CD8-positive, alpha-beta T cell (primary cell): ENCODE measurements at regions of chr12 and their contacts with region 1.

Region 1: DNA sequence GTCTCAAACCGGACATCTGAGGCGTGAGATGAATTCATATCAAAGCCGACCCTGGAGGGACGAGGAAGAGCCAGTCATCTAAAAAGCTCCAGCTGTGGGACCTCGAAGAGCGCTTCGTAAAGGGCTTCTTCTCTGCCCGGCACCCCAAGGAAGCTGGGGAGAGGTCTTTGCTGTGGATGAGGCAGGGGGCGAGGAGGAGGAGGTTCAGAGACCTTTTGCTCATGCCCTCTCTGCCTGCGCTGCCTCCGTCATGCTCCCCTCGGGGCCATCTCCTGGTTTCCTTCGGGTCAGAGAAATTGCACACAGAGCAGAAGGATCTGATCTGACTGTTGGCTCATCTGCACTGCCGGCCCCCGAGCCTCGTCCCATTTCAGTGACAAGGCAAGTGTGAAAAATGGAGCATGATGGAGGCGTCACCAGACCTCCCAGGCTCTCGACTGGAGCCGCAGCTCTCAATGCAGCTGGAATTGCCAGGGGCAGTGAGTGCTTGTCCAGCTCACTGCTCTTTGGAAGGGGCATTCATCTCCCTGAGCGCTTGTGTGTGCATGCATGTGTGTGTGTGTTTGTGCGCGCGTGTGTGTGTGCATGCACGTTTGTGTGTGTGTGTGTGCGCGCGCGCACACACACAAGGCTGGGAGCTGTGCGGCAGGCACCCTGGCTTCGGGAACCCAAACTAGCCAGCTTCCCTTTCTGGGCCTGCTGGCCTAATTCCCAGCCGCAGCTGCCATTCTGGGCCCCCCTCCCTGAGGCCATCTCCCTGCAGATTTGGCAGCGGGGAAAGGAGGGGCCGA is 9.2 kb downstream of the CABP1 start:
- DNase-seq: no peak
- ATAC-seq: no peak
- H3K4me3 ChIP-seq: no peak overlapping the region
- H3K4me3 Mint-ChIP-seq: no peak overlapping the region
- H3K27ac ChIP-seq: no peak overlapping the region
- H3K27ac Mint-ChIP-seq: no peak overlapping the region
- H3K4me1 ChIP-seq: peaks cover 7% of the 10 kb centered on the region
- H3K4me1 Mint-ChIP-seq: peaks cover 9% of the 10 kb centered on the region
- H3K27me3 ChIP-seq: peaks cover 14 to 21% of the 10 kb centered on the region in 2 experiments
- H3K27me3 Mint-ChIP-seq: peaks cover 47% of the 10 kb centered on the region
- CTCF ChIP-seq: peak; percentile 23

Region 2: GRCh38 chr12:120356567-120357030 is 293.0 kb before region 1 on chr12:
- CTCF ChIA-PET with region 1: interaction called, 6 read pairs
- POLR2A ChIA-PET with region 1: no interaction called
- intact Hi-C with region 1: loop called (anchors 1 to 5 kb)
- DNase-seq: peak; percentile 39 to 83 (median 75)
- ATAC-seq: peak; percentile 96
- H3K4me3 ChIP-seq: no peak overlapping the region
- H3K4me3 Mint-ChIP-seq: no peak overlapping the region
- H3K27ac ChIP-seq: no peak overlapping the region
- H3K27ac Mint-ChIP-seq: no peak overlapping the region
- H3K4me1 ChIP-seq: no peaks in the 10 kb centered on the region
- H3K4me1 Mint-ChIP-seq: peaks cover 2% of the 10 kb centered on the region
- H3K27me3 ChIP-seq: peaks cover 0 to 2% of the 10 kb centered on the region in 2 experiments
- H3K27me3 Mint-ChIP-seq: peaks cover 32% of the 10 kb centered on the region
- CTCF ChIP-seq: peak; percentile 89

Region 3: DNA sequence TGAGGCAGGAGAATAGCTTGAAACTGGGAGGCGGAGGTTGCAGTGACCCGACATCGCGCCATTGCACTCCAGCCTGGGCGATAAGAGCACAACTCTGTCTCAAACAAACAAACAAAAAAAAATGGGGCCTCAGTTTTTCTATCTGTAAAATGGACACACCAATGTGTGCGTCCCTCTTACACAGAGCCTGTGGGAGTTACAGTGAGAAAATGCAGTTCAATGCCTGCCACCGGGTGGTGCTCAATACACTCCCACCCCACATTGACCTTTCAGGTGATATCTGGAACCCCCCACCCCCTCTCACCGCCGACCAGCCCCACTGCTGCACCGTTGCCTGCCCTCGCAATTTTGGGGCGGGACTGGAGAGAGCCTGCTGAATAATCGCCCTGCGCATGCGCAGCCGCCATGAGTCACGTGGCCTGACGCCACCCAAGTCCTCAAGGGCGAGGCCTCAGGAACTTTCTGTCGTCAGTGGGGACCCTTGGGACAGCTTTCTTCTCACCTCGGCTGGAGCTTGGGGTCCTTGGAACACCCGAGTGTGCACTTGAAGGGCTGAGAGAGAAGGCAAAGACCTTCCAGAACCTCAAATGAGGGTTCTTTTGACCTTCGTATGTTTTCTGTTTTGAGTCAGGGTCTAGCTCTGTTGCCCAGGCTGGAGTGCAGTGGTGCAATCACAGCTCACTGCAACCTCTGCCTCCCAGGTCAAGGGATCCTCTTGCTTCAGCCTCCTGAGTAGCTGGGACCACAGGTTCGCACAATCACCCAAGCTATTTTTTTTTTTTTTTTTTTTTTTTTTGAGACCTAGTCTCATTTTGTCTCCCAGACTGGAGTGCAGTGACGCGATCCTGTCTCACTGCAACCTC is 23.8 kb before region 1 on chr12:
- CTCF ChIA-PET with region 1: interaction called, 34 read pairs
- POLR2A ChIA-PET with region 1: interaction called, 3 read pairs
- intact Hi-C with region 1: no loop called
- DNase-seq: peak in 4 of 9 experiments; percentile 16 to 51 (median 34)
- ATAC-seq: no peak
- H3K4me3 ChIP-seq: no peak overlapping the region
- H3K4me3 Mint-ChIP-seq: no peak overlapping the region
- H3K27ac ChIP-seq: no peak overlapping the region
- H3K27ac Mint-ChIP-seq: no peak overlapping the region
- H3K4me1 ChIP-seq: no peaks in the 10 kb centered on the region
- H3K4me1 Mint-ChIP-seq: no peaks in the 10 kb centered on the region
- H3K27me3 ChIP-seq: no peaks in the 10 kb centered on the region
- H3K27me3 Mint-ChIP-seq: peaks cover 7% of the 10 kb centered on the region
- CTCF ChIP-seq: no peak

Region 4: GRCh38 chr12:120702637-120703036 is 53.0 kb after region 1 on chr12:
- CTCF ChIA-PET with region 1: interaction called, 10 read pairs
- POLR2A ChIA-PET with region 1: no interaction called
- intact Hi-C with region 1: no loop called
- DNase-seq: no peak
- ATAC-seq: no peak
- H3K4me3 ChIP-seq: no peak overlapping the region
- H3K4me3 Mint-ChIP-seq: no peak overlapping the region
- H3K27ac ChIP-seq: no peak overlapping the region
- H3K27ac Mint-ChIP-seq: no peak overlapping the region
- H3K4me1 ChIP-seq: no peaks in the 10 kb centered on the region
- H3K4me1 Mint-ChIP-seq: no peaks in the 10 kb centered on the region
- H3K27me3 ChIP-seq: no peaks in the 10 kb centered on the region
- H3K27me3 Mint-ChIP-seq: no peaks in the 10 kb centered on the region
- CTCF ChIP-seq: no peak

Region 5: DNA sequence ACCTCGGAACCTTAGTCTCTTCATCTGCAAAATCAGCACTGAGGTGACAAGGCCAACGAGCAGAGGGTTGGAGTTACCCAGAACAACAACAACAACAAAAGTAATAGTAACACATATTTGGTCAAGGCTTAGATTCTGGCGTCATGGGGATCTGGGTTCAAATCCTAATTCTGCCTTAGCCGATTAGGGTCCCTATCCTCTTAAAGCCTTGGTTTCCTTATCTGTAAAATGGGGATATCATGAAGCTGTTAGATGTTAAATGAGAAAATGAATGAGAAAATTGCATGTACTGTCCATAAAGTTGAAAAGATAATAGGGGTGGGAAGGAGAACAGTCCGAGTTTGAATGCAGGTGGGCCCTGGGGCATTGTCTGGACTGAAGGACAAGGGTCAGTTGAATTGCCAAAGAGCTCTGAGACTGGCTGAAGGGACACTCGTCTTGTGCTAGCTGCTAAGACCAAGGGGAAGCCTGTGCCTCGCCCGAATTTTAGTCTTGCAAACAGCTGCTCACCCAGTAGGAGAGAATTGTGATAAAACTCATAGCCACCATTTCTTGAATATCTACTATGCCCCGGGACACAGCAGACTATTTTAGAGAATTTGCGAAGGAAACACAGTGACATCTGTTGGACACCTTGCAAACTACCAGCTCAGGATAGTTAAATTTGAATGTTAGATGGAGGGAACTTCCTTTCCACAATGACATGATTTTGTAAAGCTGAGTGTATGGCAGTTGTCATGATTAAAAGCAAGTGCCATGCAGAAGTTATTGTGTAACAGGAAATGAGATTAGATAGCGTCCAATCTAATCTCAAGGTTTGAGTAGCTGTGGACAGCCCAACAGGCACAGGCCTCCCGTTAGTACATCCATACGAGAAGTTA is 321.9 kb after region 1 on chr12:
- CTCF ChIA-PET with region 1: interaction called, 66 read pairs
- POLR2A ChIA-PET with region 1: interaction called, 3 read pairs
- intact Hi-C with region 1: loop called (anchors 1 kb)
- DNase-seq: peak in 7 of 9 experiments; percentile 11 to 78 (median 27)
- ATAC-seq: peak; percentile 95
- H3K4me3 ChIP-seq: no peak overlapping the region
- H3K4me3 Mint-ChIP-seq: no peak overlapping the region
- H3K27ac ChIP-seq: no peak overlapping the region
- H3K27ac Mint-ChIP-seq: no peak overlapping the region
- H3K4me1 ChIP-seq: no peaks in the 10 kb centered on the region
- H3K4me1 Mint-ChIP-seq: peaks cover 5% of the 10 kb centered on the region
- H3K27me3 ChIP-seq: no peaks in the 10 kb centered on the region
- H3K27me3 Mint-ChIP-seq: no peaks in the 10 kb centered on the region
- CTCF ChIP-seq: peak; percentile 69